PC-9 (cell line): ENCODE measurements at regions of chr1 and their contacts with region 1.

Region 1: GRCh38 chr1:61056573-61057439 is 25.6 kb upstream of the NFIA start:
- DNase-seq: peak; percentile 38 to 45
- H3K4me3 ChIP-seq: peak overlapping the region; percentile 89
- H3K27ac ChIP-seq: peak overlapping the region; percentile 57; the same call in 1 of the 2 replicates
- H3K4me1 ChIP-seq: peaks cover 18% of the 10 kb centered on the region
- H3K27me3 ChIP-seq: no peaks in the 10 kb centered on the region
- CTCF ChIP-seq: no peak

Region 2: DNA sequence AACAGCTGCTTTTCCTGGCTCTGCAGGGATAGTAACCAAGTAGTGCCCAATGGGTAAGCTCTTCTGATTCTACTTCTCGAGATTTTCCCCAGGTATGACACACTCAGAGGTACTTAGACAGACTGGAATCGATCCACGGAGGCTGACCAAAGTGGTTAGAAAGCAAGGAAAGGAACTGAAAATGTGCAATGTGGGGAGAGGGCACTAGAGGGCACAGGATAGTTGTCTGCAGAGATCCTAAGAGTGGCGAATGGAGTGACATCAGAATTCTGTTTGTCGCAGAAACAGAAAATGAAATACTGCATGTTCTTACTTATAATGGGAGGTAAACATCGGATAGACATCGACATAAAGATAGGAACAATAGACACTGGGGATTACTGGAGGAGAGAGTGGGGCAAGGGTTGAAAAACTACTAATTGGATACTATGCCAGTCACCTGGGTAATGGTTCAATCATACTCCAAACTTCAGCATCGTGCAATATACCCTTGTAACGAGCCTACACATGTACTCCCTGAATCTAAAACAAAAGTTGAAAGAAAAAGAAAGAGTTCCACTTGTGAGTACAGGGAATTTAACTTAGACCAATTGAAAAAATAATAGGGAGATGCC is 1153.6 kb before region 1 on chr1:
- CTCF ChIA-PET with region 1: no interaction called
- POLR2A ChIA-PET with region 1: no interaction called
- intact Hi-C with region 1: loop called (anchors 5 kb)
- DNase-seq: no peak
- H3K4me3 ChIP-seq: no peak overlapping the region
- H3K27ac ChIP-seq: no peak overlapping the region
- H3K4me1 ChIP-seq: peaks cover 12% of the 10 kb centered on the region
- H3K27me3 ChIP-seq: no peaks in the 10 kb centered on the region
- CTCF ChIP-seq: peak; percentile 45; the same call in 1 of the 2 replicates

Region 3: DNA sequence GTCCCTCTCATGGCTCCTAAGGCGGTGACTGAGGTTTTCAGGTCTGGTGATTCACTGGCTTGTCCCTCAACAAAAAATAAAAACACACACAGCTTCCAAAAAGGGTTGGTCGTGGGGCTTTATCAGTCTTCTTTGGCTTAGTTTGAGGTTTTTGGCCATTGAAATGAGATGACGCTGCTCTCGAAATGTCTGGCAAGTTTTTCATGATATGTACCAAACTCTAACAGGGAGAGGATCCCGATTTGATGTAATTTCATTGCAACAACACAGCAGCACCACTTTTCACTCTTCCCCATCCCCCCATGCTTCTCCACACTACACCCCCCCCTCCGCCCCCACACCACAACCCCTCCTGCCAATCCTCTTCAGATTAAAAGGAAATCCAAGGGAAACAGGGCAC is 161.6 kb before region 1 on chr1:
- CTCF ChIA-PET with region 1: no interaction called
- POLR2A ChIA-PET with region 1: interaction called, 10 read pairs
- intact Hi-C with region 1: no loop called
- DNase-seq: no peak
- H3K4me3 ChIP-seq: no peak overlapping the region
- H3K27ac ChIP-seq: no peak overlapping the region
- H3K4me1 ChIP-seq: no peaks in the 10 kb centered on the region
- H3K27me3 ChIP-seq: no peaks in the 10 kb centered on the region
- CTCF ChIP-seq: no peak

Region 4: GRCh38 chr1:61097317-61097716 is 40.5 kb after region 1 on chr1:
- CTCF ChIA-PET with region 1: interaction called, 10 read pairs
- POLR2A ChIA-PET with region 1: no interaction called
- intact Hi-C with region 1: no loop called
- DNase-seq: peak in 1 of 2 experiments; percentile 46
- H3K4me3 ChIP-seq: no peak overlapping the region
- H3K27ac ChIP-seq: no peak overlapping the region
- H3K4me1 ChIP-seq: peaks cover 5% of the 10 kb centered on the region; the same call in 1 of the 2 replicates
- H3K27me3 ChIP-seq: no peaks in the 10 kb centered on the region
- CTCF ChIP-seq: no peak

Region 5: DNA sequence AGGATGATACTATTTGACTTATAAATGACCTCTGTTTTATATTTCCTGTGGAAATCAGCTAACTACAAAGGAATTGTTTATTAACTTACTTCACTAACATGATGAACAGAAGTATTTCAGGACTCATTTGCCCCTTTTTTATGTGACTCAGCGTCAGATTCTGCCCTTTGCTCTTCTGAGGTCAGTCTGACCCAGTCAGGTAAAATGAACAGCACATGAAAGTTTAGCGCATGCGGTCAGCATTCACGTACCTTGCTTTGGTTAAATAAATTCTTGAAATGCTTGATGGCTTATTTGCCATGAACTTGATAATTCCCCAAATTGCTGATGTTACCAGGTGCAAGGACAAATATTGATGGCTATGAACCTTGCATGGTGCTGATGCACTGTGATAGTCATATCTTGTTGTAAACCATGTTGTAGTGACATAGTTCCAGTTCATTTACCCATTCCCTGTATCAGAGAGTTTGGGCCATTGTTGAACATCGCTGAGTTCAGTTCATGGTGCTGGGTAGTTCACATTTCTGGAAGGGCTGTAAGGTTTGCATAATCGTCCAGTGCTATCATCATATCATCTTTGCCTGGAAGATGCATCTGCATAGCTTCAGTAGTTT is 159.0 kb after region 1 on chr1:
- CTCF ChIA-PET with region 1: no interaction called
- POLR2A ChIA-PET with region 1: no interaction called
- intact Hi-C with region 1: no loop called
- DNase-seq: no peak
- H3K4me3 ChIP-seq: no peak overlapping the region
- H3K27ac ChIP-seq: no peak overlapping the region
- H3K4me1 ChIP-seq: no peaks in the 10 kb centered on the region
- H3K27me3 ChIP-seq: no peaks in the 10 kb centered on the region
- CTCF ChIP-seq: no peak